Left colon (tissue), 2 donors: ENCODE measurements at regions of chr9 and their contacts with region 1.

Region 1: GRCh38 chr9:126317513-126317912 is 9.1 kb upstream of the MVB12B start:
- DNase-seq: peak in 1 of 2 donors; percentile 58
- ATAC-seq: peak; percentile 85

Region 2: GRCh38 chr9:126386088-126386487 is 68.6 kb after region 1 on chr9:
- intact Hi-C with region 1: loop called in 1 of 2 experiments (anchors 5 kb)
- DNase-seq: peak in 1 of 2 donors; percentile 55
- ATAC-seq: peak; percentile 93

Region 3: GRCh38 chr9:126407125-126407870 is 89.8 kb after region 1 on chr9:
- intact Hi-C with region 1: loop called in 1 of 2 experiments (anchors 10 kb)
- DNase-seq: no peak
- ATAC-seq: no peak

Region 4: GRCh38 chr9:126773004-126773607 is 455.6 kb after region 1 on chr9:
- intact Hi-C with region 1: no loop called
- DNase-seq: no peak
- ATAC-seq: no peak